ENCODE measurements at regions of chr2 and their contacts with region 1.

Region 1: DNA sequence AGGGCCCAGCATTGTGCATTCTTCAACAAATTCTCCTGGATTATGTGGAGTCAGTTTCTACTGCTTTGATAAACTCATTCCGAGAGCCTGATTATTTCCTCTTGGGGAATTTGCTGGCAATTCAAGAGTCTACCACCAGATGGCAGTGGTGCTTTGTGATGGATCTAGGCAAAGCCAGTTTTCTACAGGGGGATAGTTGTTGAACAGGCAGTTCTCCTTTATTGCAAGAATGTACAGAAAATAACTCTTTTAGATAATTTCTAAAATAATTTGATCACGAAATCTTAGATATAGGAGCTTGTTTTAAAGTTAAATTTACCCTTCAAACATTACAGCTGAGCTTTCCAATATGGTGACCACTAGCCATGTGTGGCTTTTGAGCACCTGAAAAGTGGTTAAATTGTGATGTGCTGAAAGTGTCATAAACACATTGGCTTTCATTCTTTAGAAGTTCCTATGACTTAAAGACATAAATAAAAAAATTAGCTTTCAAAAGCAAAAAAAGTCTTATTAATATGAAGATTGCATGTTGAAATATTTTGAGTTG is 66.7 kb upstream of the HAAO start:
- DNase-seq: peak; percentile 74
- ATAC-seq: peak; percentile 30
- H3K4me3 Mint-ChIP-seq: no peak overlapping the region
- H3K27ac Mint-ChIP-seq: no peak overlapping the region
- H3K4me1 Mint-ChIP-seq: no peaks in the 10 kb centered on the region
- H3K27me3 Mint-ChIP-seq: no peaks in the 10 kb centered on the region

Region 2: DNA sequence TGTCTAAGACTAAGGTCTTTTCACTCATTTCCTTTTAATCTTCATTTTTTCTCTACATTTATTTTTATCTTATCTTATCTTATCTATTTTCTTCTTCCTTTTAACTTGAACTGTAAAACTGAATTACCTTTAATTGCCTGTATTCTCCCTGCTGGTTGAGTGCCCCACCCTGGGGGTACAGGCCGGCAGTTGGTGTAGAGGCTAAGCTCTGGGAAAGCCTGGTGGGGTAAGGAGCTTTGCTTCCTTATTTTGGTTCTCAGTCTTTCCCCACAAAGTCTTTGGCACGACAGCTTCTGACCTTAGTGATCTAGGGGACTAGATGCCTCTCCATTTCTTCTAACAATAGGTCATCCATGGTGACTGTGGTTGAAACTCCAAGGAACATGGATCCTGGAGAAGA is 39.9 kb before region 1 on chr2:
- CTCF ChIA-PET with region 1: no interaction called
- DNase-seq: no peak
- ATAC-seq: no peak
- H3K4me3 Mint-ChIP-seq: no peak overlapping the region
- H3K27ac Mint-ChIP-seq: no peak overlapping the region
- H3K4me1 Mint-ChIP-seq: peaks cover under 1% of the 10 kb centered on the region
- H3K27me3 Mint-ChIP-seq: peaks cover 2% of the 10 kb centered on the region

Region 3: DNA sequence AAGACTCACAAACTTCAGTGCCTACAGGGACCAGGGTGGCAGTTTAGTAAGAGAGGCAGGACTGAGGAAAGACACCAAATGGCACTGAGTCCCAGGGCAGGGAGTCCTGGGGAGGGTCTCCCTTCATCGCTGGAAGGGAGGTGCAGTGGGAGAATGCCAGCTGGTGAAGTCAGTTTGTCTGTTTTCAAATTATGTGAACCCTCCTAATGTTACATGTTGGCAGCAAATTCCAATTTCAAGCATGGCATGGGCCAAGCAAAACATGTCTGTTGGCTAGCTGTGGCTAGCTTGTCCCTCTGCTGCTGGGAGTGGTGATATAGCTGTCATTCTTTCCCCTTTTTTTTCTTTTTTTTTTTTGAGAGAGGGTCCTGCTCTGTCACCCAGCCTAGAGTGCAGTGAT is 10.8 kb before region 1 on chr2:
- CTCF ChIA-PET with region 1: interaction called, 13 read pairs
- DNase-seq: no peak
- ATAC-seq: no peak
- H3K4me3 Mint-ChIP-seq: no peak overlapping the region
- H3K27ac Mint-ChIP-seq: no peak overlapping the region
- H3K4me1 Mint-ChIP-seq: no peaks in the 10 kb centered on the region
- H3K27me3 Mint-ChIP-seq: peaks cover 5% of the 10 kb centered on the region

Region 4: GRCh38 chr2:42944779-42945415 is 85.8 kb after region 1 on chr2:
- CTCF ChIA-PET with region 1: interaction called, 26 read pairs
- DNase-seq: no peak
- ATAC-seq: no peak
- H3K4me3 Mint-ChIP-seq: no peak overlapping the region
- H3K27ac Mint-ChIP-seq: no peak overlapping the region
- H3K4me1 Mint-ChIP-seq: peaks cover 4% of the 10 kb centered on the region
- H3K27me3 Mint-ChIP-seq: peaks cover 2% of the 10 kb centered on the region

Measured in activated CD8-positive, alpha-beta memory T cell treated with anti-CD3 and anti-CD28 coated beads, Interleukin-2, amount 10 ng/mL, durations not matched to agents 7 days and 5 days (primary cell).